Sigmoid colon (tissue), 7 donors: ENCODE measurements at regions of chr20 and their contacts with region 1.

Region 1: DNA sequence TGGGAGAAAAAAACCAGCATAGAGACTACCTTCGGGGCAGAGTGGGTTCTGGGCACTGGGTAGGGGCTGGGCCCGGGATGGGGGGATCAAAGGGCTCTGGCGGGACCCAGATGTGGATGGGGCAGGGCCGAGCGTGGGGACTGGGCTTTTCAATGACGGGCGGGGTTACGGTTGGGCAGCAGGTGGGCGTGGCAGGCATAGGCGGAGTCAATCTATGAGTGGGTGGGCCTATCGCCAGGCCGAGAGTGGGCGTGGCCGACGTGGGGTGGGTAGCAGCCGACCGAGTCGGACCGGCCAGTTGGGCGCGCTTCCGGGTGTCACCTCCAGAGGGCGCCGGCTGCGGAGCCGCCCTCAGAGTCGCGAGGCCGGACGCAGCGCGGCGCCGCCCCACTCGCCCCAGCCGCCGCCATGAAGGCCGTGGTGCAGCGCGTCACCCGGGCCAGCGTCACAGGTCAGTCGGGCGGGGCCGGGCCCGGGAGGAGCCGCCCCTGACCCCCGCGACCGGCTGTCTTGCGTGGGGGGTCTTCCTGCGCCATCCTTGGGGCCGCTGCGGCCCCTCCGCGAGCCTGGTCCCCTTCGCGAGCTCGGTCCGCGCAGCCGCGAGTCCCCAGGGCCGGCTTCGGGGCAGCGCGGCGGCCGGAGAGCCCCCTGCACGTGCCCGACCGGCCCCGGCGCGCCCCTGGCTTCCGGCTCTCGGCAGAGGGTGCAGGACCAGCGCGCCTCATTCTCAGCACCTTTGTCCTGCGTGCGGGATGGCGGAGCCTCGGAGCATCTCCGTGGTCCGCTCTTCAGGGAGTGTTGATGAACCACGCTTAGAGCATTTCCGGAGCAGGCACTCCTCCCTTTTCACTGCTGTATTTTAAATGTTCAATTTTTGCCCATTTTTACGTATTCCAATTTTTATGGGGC is at the start of gene DTD1:
- DNase-seq: peak; percentile 96
- H3K4me3 ChIP-seq: peak within 1 kb of the TSS; percentile 50 to 96 (median 81)
- H3K27ac ChIP-seq: peak within 1 kb of the TSS; percentile 74 to 83 (median 81)
- H3K4me1 ChIP-seq: peaks cover 0 to 31% (median 7%) of the 10 kb centered on the region in 4 donors
- H3K27me3 ChIP-seq: no peaks in the 10 kb centered on the region
- CTCF ChIP-seq: peak in 3 of 4 experiments; percentile 8 to 81 (median 46)
- EP300 ChIP-seq: no peak
- POLR2A ChIP-seq: no peak
- total RNA-seq, gene DTD1: 11.6 to 22.1 (median 15.5) TPM

Region 2: DNA sequence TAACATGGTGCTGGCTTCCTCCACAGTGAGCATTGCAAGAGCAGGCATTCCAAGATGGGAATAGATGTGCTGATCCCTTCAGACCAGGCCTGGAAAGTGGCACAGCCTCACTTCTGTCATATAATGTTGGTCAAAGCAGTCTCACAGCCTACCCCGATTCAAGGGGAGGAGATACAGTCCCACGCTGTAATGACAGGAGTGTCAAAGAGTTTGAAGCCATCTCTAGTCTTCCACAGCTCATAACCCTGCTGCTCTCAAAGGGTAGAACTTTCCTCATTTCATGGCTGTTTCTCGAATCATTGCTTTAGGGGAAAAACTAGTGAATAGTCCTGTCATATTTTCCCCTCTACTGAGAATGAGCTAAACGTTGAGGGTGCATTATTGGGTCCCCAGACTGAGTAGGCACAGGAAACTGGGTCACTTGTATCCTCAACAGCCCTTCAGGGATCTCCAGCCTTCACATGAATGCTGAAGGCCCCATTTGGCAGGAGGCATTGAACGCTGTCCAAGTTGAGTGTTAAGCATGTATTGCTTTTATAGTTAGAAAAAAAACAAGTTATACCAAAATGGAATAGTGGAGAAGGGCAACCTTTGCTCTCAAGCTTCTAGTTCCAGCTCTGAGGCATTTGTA is 27.2 kb after region 1 on chr20:
- intact Hi-C with region 1: loop called (anchors 2 kb)
- DNase-seq: no peak
- H3K4me3 ChIP-seq: no peak overlapping the region
- H3K27ac ChIP-seq: peak overlapping the region in 1 of 4 donors; percentile 40
- H3K4me1 ChIP-seq: peaks cover 0 to 19% (median 12%) of the 10 kb centered on the region in 4 donors
- H3K27me3 ChIP-seq: no peaks in the 10 kb centered on the region
- CTCF ChIP-seq: no peak
- EP300 ChIP-seq: no peak
- POLR2A ChIP-seq: no peak

Region 3: GRCh38 chr20:18623156-18623910 is 35.4 kb after region 1 on chr20:
- intact Hi-C with region 1: loop called (anchors 2 kb)
- DNase-seq: no peak
- H3K4me3 ChIP-seq: no peak overlapping the region
- H3K27ac ChIP-seq: no peak overlapping the region
- H3K4me1 ChIP-seq: peaks cover 0 to 18% (median 0%) of the 10 kb centered on the region in 4 donors
- H3K27me3 ChIP-seq: no peaks in the 10 kb centered on the region
- CTCF ChIP-seq: no peak
- EP300 ChIP-seq: no peak
- POLR2A ChIP-seq: no peak

Region 4: GRCh38 chr20:18793625-18794427 is 205.9 kb after region 1 on chr20:
- intact Hi-C with region 1: loop called (anchors 10 kb)
- DNase-seq: peak; percentile 94
- H3K4me3 ChIP-seq: peak overlapping the region; percentile 60 to 79 (median 66)
- H3K27ac ChIP-seq: peak overlapping the region; percentile 86 to 89 (median 88)
- H3K4me1 ChIP-seq: peaks cover 0 to 15% (median 9%) of the 10 kb centered on the region in 4 donors
- H3K27me3 ChIP-seq: no peaks in the 10 kb centered on the region
- CTCF ChIP-seq: no peak
- EP300 ChIP-seq: peak in 1 of 4 donors; percentile 14
- POLR2A ChIP-seq: peak; percentile 58 to 65